HEK293T (cell line): ENCODE measurements at regions of chr1 and their contacts with region 1.

Region 1: DNA sequence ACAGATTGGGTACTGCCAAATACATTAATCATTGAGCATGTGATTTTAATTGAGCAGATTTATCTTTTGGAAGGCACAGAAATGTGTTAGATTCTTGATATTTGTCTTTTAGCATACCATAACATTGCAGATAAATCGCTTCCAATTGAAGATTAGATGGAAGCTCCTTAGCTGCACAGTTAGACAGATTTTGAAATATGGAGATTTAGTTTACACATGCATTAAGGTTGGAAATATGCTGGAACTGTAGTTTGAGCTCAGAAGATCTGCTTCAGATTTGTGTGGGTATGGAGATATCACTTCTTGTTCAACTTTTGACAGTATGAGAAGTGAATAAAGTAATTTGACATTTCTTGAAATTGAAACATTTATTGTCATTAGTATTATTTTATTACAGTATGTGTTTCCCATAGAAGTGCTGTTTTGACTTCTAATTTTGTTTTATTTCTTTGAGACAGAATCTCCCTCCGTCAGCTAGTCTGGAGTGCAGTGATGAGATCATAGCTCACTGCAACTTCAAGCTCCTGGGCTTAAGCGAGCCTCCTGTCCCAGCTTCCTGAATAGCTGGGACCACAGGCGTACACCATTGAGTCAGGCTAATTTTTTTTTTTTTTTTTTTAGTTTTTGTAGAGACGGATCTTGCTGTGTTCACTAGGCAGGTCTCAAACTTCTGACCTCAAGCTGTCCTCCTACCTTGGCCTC is 29.1 kb downstream of the THRAP3 start:
- DNase-seq: no peak

Region 2: GRCh38 chr1:35807614-35808449 is 445.5 kb before region 1 on chr1 and contains the start of gene AGO4:
- CTCF ChIA-PET with region 1: no interaction called
- POLR2A ChIA-PET with region 1: no interaction called
- DNase-seq: peak; percentile 69

Region 3: GRCh38 chr1:36273024-36273423 is 19.7 kb after region 1 on chr1:
- CTCF ChIA-PET with region 1: no interaction called
- POLR2A ChIA-PET with region 1: no interaction called
- DNase-seq: no peak

Region 4: GRCh38 chr1:36285448-36286101 is 32.3 kb after region 1 on chr1:
- CTCF ChIA-PET with region 1: interaction called, 10 read pairs
- POLR2A ChIA-PET with region 1: no interaction called
- DNase-seq: peak; percentile 69